Activated T-helper 1 cell treated with anti-CD3 and anti-CD28 coated beads, Interleukin-12 subunit alpha, Interleukin-12 subunit beta, Interleukin-2, Interleukin-4 antibody, amounts not matched to agents 30 ng/mL and 10 ng/mL and 1 ng/mL, durations not matched to agents 14 hours and 24 hours and 36 hours (primary cell): ENCODE measurements at regions of chr18 and their contacts with region 1.

Region 1: GRCh38 chr18:9334329-9334972 is at the start of gene TWSG1:
- DNase-seq: peak; percentile 88
- H3K4me3 Mint-ChIP-seq: peak within 1 kb of the TSS; percentile 92
- H3K27ac Mint-ChIP-seq: peak within 1 kb of the TSS; percentile 49
- H3K4me1 Mint-ChIP-seq: peaks cover 33% of the 10 kb centered on the region
- H3K27me3 Mint-ChIP-seq: peaks cover 33% of the 10 kb centered on the region
- total RNA-seq, gene TWSG1: 10.6 and 11.3 TPM in 2 replicates

Region 2: GRCh38 chr18:8608795-8609658 is 725.4 kb before region 1 on chr18 and contains the start of gene RAB12:
- intact Hi-C with region 1: loop called (anchors 5 kb)
- DNase-seq: peak; percentile 83
- H3K4me3 Mint-ChIP-seq: peak within 1 kb of the TSS; percentile 91
- H3K27ac Mint-ChIP-seq: peak within 1 kb of the TSS; percentile 88
- H3K4me1 Mint-ChIP-seq: peaks cover 50% of the 10 kb centered on the region
- H3K27me3 Mint-ChIP-seq: peaks cover 12% of the 10 kb centered on the region
- total RNA-seq, gene RAB12: 18.9 and 19.2 TPM in 2 replicates

Region 3: GRCh38 chr18:9066817-9067306 is 267.6 kb before region 1 on chr18:
- intact Hi-C with region 1: loop called (anchors 2 kb)
- DNase-seq: no peak
- H3K4me3 Mint-ChIP-seq: no peak overlapping the region
- H3K27ac Mint-ChIP-seq: peak overlapping the region; percentile 69
- H3K4me1 Mint-ChIP-seq: peaks cover 42% of the 10 kb centered on the region
- H3K27me3 Mint-ChIP-seq: no peaks in the 10 kb centered on the region

Region 4: GRCh38 chr18:9136315-9137155 is 197.9 kb before region 1 on chr18 and contains the start of gene ANKRD12:
- intact Hi-C with region 1: loop called (anchors 1 kb)
- DNase-seq: peak; percentile 98
- H3K4me3 Mint-ChIP-seq: peak within 1 kb of the TSS; percentile 94
- H3K27ac Mint-ChIP-seq: peak within 1 kb of the TSS; percentile 99
- H3K4me1 Mint-ChIP-seq: peaks cover 54% of the 10 kb centered on the region
- H3K27me3 Mint-ChIP-seq: no peaks in the 10 kb centered on the region
- total RNA-seq, gene ANKRD12: 61.3 and 62.2 TPM in 2 replicates

Region 5: GRCh38 chr18:9474983-9475642 is 140.7 kb after region 1 on chr18 and contains the start of gene RALBP1:
- intact Hi-C with region 1: loop called (anchors 1 kb)
- DNase-seq: peak; percentile 98
- H3K4me3 Mint-ChIP-seq: peak within 1 kb of the TSS; percentile 89
- H3K27ac Mint-ChIP-seq: peak within 1 kb of the TSS; percentile 95
- H3K4me1 Mint-ChIP-seq: peaks cover 30% of the 10 kb centered on the region
- H3K27me3 Mint-ChIP-seq: peaks cover 4% of the 10 kb centered on the region
- total RNA-seq, gene RALBP1: 40.9 and 42.4 TPM in 2 replicates

Region 6: GRCh38 chr18:10525371-10526210 is 1191.1 kb after region 1 on chr18 and contains the start of gene NAPG:
- intact Hi-C with region 1: loop called (anchors 2 kb)
- DNase-seq: peak; percentile 91
- H3K4me3 Mint-ChIP-seq: peak within 1 kb of the TSS; percentile 97
- H3K27ac Mint-ChIP-seq: peak within 1 kb of the TSS; percentile 98
- H3K4me1 Mint-ChIP-seq: peaks cover 63% of the 10 kb centered on the region
- H3K27me3 Mint-ChIP-seq: peaks cover 7% of the 10 kb centered on the region
- total RNA-seq, gene NAPG: 37.4 and 40.3 TPM in 2 replicates